Activated naive CD4-positive, alpha-beta T cell treated with anti-CD3 and anti-CD28 coated beads for 36 hours (primary cell): ENCODE measurements at regions of chr1 and their contacts with region 1.

Region 1: DNA sequence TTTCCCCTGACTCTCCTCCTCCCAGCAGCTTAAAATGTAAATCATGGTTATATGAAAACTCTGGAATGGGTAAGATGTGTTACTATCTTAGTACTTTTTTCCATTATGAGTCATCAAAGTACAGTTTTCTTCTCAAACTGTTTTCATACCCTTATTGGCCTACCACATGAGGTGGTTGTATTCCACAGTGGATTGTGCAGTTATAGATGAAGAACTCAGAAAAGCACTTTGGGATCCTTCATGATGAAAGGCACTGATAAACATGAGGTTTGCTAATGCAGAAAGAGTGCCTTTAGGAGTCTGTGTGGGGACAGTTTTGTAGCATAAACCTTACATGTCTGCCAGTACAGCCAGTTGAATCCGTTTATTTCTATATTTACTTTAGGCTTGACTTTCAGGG is 32.0 kb upstream of the MYOCOS start:
- DNase-seq: no peak
- H3K4me3 Mint-ChIP-seq: no peak overlapping the region
- H3K27ac Mint-ChIP-seq: peak overlapping the region; percentile 51
- H3K4me1 Mint-ChIP-seq: peaks cover 16% of the 10 kb centered on the region
- H3K27me3 Mint-ChIP-seq: no peaks in the 10 kb centered on the region

Region 2: DNA sequence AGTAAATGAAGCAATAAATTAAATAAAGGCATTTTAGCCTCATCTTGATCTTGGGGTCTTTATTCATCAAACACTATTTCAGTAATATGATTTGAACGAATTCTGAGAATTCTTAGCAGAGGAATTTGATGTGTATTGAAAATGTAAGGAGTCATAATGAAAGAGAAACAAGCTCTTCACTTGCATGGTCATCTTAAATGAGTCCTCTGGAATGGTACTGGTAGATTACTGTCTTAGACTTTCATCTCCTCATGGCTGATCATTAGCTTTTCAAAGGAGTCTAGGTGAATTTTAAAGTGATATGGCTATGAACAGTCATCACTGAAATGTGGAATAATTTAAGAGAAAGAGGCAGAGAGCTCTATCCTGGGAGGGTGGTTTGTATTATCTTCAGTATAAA is 74.7 kb before region 1 on chr1:
- CTCF ChIA-PET with region 1: no interaction called
- intact Hi-C with region 1: no loop called
- DNase-seq: no peak
- H3K4me3 Mint-ChIP-seq: no peak overlapping the region
- H3K27ac Mint-ChIP-seq: no peak overlapping the region
- H3K4me1 Mint-ChIP-seq: peaks cover 36% of the 10 kb centered on the region
- H3K27me3 Mint-ChIP-seq: no peaks in the 10 kb centered on the region

Region 3: GRCh38 chr1:171545523-171545922 is 44.5 kb before region 1 on chr1:
- CTCF ChIA-PET with region 1: no interaction called
- intact Hi-C with region 1: loop called (anchors 5 kb)
- DNase-seq: no peak
- H3K4me3 Mint-ChIP-seq: no peak overlapping the region
- H3K27ac Mint-ChIP-seq: no peak overlapping the region
- H3K4me1 Mint-ChIP-seq: peaks cover 9% of the 10 kb centered on the region
- H3K27me3 Mint-ChIP-seq: no peaks in the 10 kb centered on the region

Region 4: DNA sequence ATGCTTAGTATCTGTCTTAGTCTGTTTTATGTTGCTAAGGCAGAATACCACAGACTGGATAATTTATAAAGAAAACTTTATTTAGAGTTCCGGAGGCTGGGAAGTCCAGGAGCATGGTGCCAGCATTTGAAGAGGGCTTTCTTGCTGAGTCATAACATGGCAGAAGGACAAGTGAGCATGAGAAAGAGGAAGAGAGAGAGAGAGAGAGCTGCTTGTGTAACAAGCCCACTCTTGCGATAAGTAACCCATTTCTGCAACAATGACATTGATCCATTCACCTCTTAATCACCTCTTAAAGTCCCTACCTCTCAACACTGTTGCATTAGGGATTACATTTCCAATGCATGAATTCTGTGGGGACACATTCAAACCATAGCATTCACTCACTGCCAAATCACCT is 20.4 kb after region 1 on chr1:
- CTCF ChIA-PET with region 1: no interaction called
- intact Hi-C with region 1: no loop called
- DNase-seq: no peak
- H3K4me3 Mint-ChIP-seq: no peak overlapping the region
- H3K27ac Mint-ChIP-seq: no peak overlapping the region
- H3K4me1 Mint-ChIP-seq: no peaks in the 10 kb centered on the region
- H3K27me3 Mint-ChIP-seq: no peaks in the 10 kb centered on the region

Region 5: GRCh38 chr1:171715813-171716251 is 125.8 kb after region 1 on chr1:
- CTCF ChIA-PET with region 1: no interaction called
- intact Hi-C with region 1: no loop called
- DNase-seq: no peak
- H3K4me3 Mint-ChIP-seq: no peak overlapping the region
- H3K27ac Mint-ChIP-seq: no peak overlapping the region
- H3K4me1 Mint-ChIP-seq: peaks cover 4% of the 10 kb centered on the region
- H3K27me3 Mint-ChIP-seq: no peaks in the 10 kb centered on the region

Region 6: DNA sequence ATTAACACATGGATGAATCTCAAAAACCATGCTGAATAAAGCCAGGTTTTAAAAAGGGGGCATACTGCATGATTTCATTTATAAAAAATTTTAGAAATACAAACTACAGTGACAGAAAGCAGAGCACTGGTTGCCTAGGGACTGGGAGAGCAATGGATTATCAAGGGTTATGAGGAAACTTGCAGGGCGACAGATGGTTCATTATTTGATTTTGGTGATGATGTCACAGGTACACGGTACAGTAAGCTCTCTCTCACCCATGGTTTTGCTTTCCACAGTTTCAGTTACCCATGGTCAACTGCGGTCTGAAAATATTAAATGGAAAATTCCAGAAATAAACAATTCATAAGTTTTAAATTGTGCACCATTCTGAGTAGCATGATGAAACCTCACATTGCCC is 137.8 kb after region 1 on chr1:
- CTCF ChIA-PET with region 1: no interaction called
- intact Hi-C with region 1: no loop called
- DNase-seq: no peak
- H3K4me3 Mint-ChIP-seq: no peak overlapping the region
- H3K27ac Mint-ChIP-seq: no peak overlapping the region
- H3K4me1 Mint-ChIP-seq: peaks cover 10% of the 10 kb centered on the region
- H3K27me3 Mint-ChIP-seq: no peaks in the 10 kb centered on the region